Activated naive CD4-positive, alpha-beta T cell treated with anti-CD3 and anti-CD28 coated beads for 36 hours (primary cell): ENCODE measurements at regions of chr6 and their contacts with region 1.

Region 1: GRCh38 chr6:113632220-113632864 is 224.8 kb upstream of the MARCKS start:
- DNase-seq: peak; percentile 58
- H3K4me3 Mint-ChIP-seq: no peak overlapping the region
- H3K27ac Mint-ChIP-seq: no peak overlapping the region
- H3K4me1 Mint-ChIP-seq: peaks cover 28% of the 10 kb centered on the region
- H3K27me3 Mint-ChIP-seq: peaks cover 17% of the 10 kb centered on the region

Region 2: DNA sequence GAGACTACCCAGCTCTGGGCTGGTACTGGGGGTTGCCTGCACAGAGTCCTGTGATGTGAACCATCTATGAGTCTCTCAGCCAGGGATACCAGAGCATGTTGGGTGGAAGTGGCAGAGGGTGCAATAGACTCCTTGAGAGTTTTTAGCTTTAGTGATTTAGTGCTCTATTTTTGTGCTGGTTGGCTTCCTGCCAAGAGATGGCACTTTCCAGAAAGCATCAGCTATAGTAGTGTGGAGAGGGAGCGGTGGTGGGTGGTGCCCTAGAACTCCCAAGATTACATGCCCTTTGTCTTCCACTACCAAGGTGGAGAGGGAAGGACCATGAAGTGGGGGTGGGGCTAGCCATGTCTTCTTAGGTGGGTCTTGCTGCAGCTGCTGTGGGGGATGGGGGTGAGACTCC is 604.3 kb before region 1 on chr6:
- CTCF ChIA-PET with region 1: no interaction called
- intact Hi-C with region 1: no loop called
- DNase-seq: no peak
- H3K4me3 Mint-ChIP-seq: no peak overlapping the region
- H3K27ac Mint-ChIP-seq: no peak overlapping the region
- H3K4me1 Mint-ChIP-seq: no peaks in the 10 kb centered on the region
- H3K27me3 Mint-ChIP-seq: no peaks in the 10 kb centered on the region

Region 3: GRCh38 chr6:113574147-113574546 is 58.2 kb before region 1 on chr6:
- CTCF ChIA-PET with region 1: no interaction called
- intact Hi-C with region 1: no loop called
- DNase-seq: no peak
- H3K4me3 Mint-ChIP-seq: no peak overlapping the region
- H3K27ac Mint-ChIP-seq: no peak overlapping the region
- H3K4me1 Mint-ChIP-seq: no peaks in the 10 kb centered on the region
- H3K27me3 Mint-ChIP-seq: no peaks in the 10 kb centered on the region

Region 4: DNA sequence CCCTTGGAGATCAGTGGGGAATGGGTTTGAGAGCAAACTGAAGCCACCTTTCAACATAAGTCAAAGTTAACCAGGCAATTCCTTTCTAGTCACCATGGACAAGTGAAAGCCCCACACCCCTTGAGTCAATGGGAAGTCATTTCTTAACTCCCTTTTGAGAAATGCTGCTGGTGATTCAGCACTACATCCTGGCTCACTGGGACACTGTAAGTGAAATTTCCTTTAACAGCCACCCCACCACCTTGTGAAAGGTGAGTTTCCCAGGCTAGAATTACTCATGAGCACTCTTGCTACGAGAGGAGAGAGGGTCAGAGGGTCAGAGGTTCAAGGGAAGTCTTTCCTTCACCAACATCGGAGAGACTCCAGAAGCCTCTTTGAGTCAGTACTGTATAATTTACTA is 131.5 kb after region 1 on chr6:
- CTCF ChIA-PET with region 1: no interaction called
- intact Hi-C with region 1: loop called (anchors 5 kb)
- DNase-seq: peak; percentile 7
- H3K4me3 Mint-ChIP-seq: no peak overlapping the region
- H3K27ac Mint-ChIP-seq: no peak overlapping the region
- H3K4me1 Mint-ChIP-seq: peaks cover 2% of the 10 kb centered on the region
- H3K27me3 Mint-ChIP-seq: no peaks in the 10 kb centered on the region

Region 5: GRCh38 chr6:113805173-113805790 is 172.9 kb after region 1 on chr6:
- CTCF ChIA-PET with region 1: no interaction called
- intact Hi-C with region 1: loop called (anchors 1 kb)
- DNase-seq: no peak
- H3K4me3 Mint-ChIP-seq: no peak overlapping the region
- H3K27ac Mint-ChIP-seq: no peak overlapping the region
- H3K4me1 Mint-ChIP-seq: peaks cover 7% of the 10 kb centered on the region
- H3K27me3 Mint-ChIP-seq: peaks cover 4% of the 10 kb centered on the region